Dorsolateral prefrontal cortex (tissue), 120 donors: ENCODE measurements at regions of chr13 and their contacts with region 1.

Region 1: GRCh38 chr13:50401049-50401505 is 385.8 kb downstream of the KCNRG start:
- DNase-seq: peak in 7 of 10 donors; percentile 17 to 80 (median 42)
- H3K4me3 ChIP-seq: peak overlapping the region in 34 of 59 donors; percentile 2 to 58 (median 32)
- H3K27ac ChIP-seq: peak overlapping the region; percentile 38 to 98 (median 91)
- H3K27me3 ChIP-seq: no peaks in the 10 kb centered on the region
- CTCF ChIP-seq: peak in 11 of 56 donors; percentile 6 to 29 (median 12)

Region 2: DNA sequence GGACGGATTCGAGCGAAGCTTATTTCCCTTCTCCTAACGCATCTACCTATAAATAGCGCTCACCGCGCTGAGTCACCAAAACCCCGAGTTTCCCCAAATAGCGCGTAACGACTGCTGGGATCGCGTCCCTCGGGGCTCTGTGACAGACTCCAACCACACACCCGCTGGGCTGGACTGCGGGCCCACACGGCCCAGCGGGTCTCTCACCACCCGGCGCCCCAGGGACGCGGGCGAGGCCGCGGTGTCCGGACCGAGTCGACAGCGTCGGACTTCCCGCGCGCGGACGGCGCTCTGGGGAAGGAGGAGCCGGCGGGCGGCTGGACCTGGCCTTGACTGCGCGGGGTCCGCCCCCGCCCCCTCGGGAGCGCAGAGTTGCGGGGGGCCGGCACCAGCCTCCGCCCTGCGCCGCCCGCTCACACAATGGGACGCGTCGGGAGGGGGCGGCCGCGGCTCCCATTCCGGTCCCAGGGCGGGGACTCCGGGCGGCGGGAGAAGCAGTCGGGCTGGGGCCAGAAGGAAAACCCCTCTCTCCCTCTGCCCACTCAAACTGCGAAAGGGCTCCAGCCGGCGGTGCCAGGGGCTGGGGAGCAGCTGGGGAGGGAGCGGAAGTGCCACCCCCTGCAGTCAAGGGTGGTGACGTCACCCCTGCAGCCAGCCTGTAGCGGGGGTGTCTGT is 277.1 kb before region 1 on chr13:
- intact Hi-C with region 1: loop called (anchors 5 to 10 kb)
- DNase-seq: peak in 9 of 10 donors; percentile 56 to 94 (median 72)
- H3K4me3 ChIP-seq: peak overlapping the region; percentile 66 to 99 (median 96)
- H3K27ac ChIP-seq: peak overlapping the region; percentile 95 to 100 (median 100)
- H3K27me3 ChIP-seq: peaks cover 0 to 11% (median 0%) of the 10 kb centered on the region in 45 donors
- CTCF ChIP-seq: peak in 25 of 56 donors; percentile 0 to 49 (median 20)

Region 3: DNA sequence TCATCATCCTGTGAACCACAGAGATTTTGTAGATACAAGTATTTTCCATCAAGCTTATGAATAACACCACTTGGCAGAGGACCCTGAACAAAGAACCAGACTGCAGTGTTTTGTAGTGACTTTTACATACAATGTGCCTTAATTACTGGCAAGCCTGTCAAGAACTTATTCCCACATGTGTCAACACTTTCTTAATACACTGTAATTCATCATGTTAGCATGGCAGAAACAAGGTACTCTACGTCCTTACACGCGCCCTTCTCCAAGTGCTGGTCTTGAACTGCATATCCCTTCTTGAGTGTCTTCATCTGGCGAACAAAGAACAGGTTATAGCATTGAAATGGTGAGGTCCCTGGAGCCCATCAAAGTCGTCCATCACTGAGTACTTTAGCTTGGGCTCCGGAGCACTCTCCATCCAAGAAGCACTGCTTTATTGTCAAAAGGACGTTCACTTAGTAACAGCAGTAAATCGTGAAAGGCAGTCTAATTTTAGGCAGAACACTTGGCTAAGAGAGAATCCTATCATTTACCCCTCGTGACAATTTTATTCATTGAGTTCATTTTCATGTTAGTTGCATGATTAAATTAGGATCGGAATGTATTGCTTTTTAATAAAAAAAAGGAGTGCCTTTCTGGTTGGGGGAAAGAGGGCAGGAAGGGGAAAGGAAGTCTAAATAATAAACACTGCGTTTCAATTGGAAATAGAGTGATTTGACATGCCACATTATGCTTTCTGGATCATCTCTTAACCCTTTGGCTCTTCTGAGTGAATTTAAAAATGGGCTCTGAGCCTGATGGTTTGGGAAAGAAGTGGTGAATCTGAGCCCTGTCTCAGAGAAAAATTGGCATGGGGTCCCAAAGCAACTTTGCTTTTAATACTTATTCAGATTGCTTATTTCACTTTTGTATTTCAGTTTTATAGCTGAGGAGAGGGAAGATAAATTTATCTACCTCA is 66.4 kb after region 1 on chr13:
- intact Hi-C with region 1: loop called in 1 of 2 experiments (anchors 10 kb)
- DNase-seq: no peak
- H3K4me3 ChIP-seq: no peak overlapping the region
- H3K27ac ChIP-seq: no peak overlapping the region
- H3K27me3 ChIP-seq: no peaks in the 10 kb centered on the region
- CTCF ChIP-seq: no peak

Region 4: DNA sequence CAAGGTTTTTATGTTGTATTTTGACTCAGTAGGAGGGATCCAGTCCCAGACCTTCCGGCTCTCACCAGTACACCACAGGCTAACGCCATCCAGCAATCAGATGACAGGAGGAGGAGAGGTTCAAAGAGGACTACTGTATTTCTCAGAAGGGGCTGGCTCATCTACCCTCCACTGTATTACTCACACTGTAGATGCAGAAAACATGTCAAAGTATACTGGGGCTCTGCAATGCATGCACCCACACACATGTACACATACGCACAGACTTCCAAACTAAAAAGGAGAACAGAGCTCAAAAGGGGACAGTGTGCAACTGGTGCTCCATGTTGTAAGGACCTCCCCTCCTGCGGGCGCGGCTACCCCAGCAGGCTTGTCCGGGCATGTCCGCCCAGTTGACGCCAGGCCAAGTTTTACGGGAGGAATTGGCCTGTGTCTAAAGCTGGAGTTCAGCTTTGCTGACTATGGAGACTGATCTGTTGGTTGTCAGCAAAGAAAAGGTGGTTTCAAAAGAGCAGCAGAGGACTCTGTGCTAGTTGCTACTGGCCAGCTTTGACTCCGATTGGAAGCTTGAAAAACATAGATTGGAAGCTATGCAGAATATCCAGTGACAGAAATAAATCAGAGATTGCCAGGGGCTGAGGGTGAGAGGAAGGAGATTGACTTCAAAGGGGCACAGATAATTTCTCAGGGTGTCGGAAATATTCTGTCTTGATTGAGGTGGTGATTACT is 128.2 kb after region 1 on chr13:
- intact Hi-C with region 1: loop called (anchors 5 kb)
- DNase-seq: peak; percentile 41 to 73 (median 70)
- H3K4me3 ChIP-seq: peak overlapping the region in 51 of 59 donors; percentile 6 to 58 (median 33)
- H3K27ac ChIP-seq: peak overlapping the region; percentile 0 to 93 (median 76)
- H3K27me3 ChIP-seq: no peaks in the 10 kb centered on the region
- CTCF ChIP-seq: peak in 6 of 56 donors; percentile 9 to 34 (median 17)

Region 5: GRCh38 chr13:50684366-50684765 is 283.3 kb after region 1 on chr13:
- intact Hi-C with region 1: loop called in 1 of 2 experiments (anchors 5 kb)
- DNase-seq: peak in 2 of 10 donors; percentile 31 to 39
- H3K4me3 ChIP-seq: no peak overlapping the region
- H3K27ac ChIP-seq: peak overlapping the region in 51 of 59 donors; percentile 32 to 95 (median 86)
- H3K27me3 ChIP-seq: no peaks in the 10 kb centered on the region
- CTCF ChIP-seq: no peak